Endothelial cell of umbilical vein (primary cell): ENCODE measurements at regions of chr6 and their contacts with region 1.

Region 1: DNA sequence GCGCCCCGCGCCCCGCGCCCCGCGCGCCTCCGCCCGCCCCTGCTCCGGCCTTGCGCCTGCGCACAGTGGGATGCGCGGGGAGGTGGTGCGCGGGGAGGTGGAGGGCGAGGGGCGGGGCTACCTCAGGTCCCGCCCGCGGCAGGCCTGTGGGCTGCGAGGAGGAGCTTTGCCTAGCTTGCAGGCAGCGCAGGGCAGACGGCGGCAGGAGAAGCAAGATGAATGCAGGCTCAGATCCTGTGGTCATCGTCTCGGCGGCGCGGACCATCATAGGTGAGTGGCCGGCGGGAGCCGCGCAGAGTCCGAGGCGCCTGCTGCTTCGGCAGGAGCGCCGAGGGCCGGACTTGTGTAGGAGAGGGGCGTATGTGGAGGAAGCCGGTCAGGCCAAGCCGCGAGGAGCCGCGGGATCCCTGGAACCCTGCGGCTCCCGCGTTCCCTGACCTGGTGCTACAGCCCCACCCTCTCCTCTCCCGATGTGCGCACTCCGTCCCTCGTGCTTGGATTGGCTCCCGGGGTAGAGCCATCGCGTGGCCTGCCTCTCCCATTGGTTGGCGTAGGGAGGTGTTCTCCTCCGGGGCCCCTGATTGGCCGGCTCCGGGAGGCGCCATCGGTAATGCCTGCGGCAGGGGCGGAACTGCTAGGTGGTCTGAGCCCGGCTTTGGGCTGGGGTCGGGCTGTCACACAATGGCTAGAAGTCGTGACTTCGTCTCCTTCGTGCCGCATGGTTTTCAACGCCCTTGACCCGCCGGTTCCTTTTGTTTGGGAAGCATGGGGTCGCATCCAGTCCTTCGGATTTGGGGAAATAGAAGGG is at the start of gene ACAT2:
- DNase-seq: peak; percentile 94
- H3K4me3 ChIP-seq: peak within 1 kb of the TSS; percentile 73 to 97 (median 92)
- H3K27ac ChIP-seq: peak within 1 kb of the TSS; percentile 85
- H3K4me1 ChIP-seq: peaks cover 20% of the 10 kb centered on the region
- H3K27me3 ChIP-seq: no peaks in the 10 kb centered on the region
- CTCF ChIP-seq: no peak
- POLR2A ChIP-seq: peak; percentile 72
- total RNA-seq, gene ACAT2: 114 and 131 TPM in 2 replicates

Region 2: GRCh38 chr6:159324596-159324995 is 437.5 kb before region 1 on chr6:
- CTCF ChIA-PET with region 1: no interaction called
- POLR2A ChIA-PET with region 1: no interaction called
- dilution Hi-C with region 1: no loop called
- intact Hi-C with region 1: no loop called
- DNase-seq: no peak
- H3K4me3 ChIP-seq: no peak overlapping the region
- H3K27ac ChIP-seq: no peak overlapping the region
- H3K4me1 ChIP-seq: no peaks in the 10 kb centered on the region
- H3K27me3 ChIP-seq: no peaks in the 10 kb centered on the region
- CTCF ChIP-seq: no peak
- POLR2A ChIP-seq: no peak

Region 3: DNA sequence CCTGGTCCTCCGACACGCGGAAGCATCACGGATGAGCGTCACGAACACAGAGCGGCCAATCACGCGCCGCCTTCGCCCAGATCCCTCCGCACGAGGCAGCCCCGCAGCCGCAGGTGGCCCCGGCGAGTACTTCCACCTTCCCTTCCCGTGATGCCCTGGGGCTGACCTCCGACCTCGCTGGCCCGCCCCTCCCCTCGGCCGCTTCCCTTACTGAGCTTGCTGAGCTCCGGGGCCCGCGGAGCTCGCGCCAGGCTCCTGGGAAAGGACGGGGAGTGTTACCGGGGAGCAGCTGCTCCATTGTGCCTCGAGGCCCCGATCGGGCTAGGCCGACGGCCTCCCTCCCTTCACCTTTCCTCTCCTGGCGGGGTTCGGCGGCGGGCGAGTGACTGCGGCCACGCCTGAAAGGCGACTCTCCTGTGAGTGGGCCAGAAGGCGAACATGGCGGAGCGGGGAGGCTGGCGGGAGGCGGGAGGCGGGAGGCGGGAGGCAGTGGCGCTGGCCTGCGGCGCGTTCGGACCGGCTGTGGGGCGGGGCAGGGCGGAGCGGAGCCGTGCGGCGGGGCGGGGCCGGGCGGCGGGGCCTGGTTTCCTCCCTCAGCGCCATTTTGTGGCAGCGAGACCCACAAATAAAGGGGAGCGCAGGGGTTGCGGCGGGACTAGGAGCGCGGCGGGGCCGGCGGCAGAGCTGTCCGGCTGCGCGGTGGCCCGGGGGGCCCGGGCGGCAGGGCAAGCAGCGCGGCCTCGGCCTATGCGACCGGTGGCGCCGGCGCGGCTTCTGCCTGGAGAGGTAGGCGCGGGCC is 35.0 kb before region 1 on chr6 and contains the start of gene WTAP:
- CTCF ChIA-PET with region 1: interaction called, 3 read pairs
- POLR2A ChIA-PET with region 1: interaction called, 3 read pairs
- dilution Hi-C with region 1: no loop called
- intact Hi-C with region 1: loop called (anchors 1 kb)
- DNase-seq: peak; percentile 95
- H3K4me3 ChIP-seq: peak within 1 kb of the TSS; percentile 83 to 100 (median 89)
- H3K27ac ChIP-seq: peak within 1 kb of the TSS; percentile 93
- H3K4me1 ChIP-seq: peaks cover 21% of the 10 kb centered on the region
- H3K27me3 ChIP-seq: no peaks in the 10 kb centered on the region
- CTCF ChIP-seq: no peak
- POLR2A ChIP-seq: peak; percentile 58
- total RNA-seq, gene WTAP: 75.6 and 81.6 TPM in 2 replicates

Region 4: GRCh38 chr6:159919011-159919511 is 157.0 kb after region 1 on chr6:
- CTCF ChIA-PET with region 1: no interaction called
- POLR2A ChIA-PET with region 1: no interaction called
- dilution Hi-C with region 1: no loop called
- intact Hi-C with region 1: no loop called
- DNase-seq: no peak
- H3K4me3 ChIP-seq: no peak overlapping the region
- H3K27ac ChIP-seq: no peak overlapping the region
- H3K4me1 ChIP-seq: no peaks in the 10 kb centered on the region
- H3K27me3 ChIP-seq: no peaks in the 10 kb centered on the region
- CTCF ChIP-seq: no peak
- POLR2A ChIP-seq: no peak